ENCODE measurements at regions of chr4 and their contacts with region 1.

Region 1: GRCh38 chr4:103099691-103100392 is at the start of gene BDH2:
- DNase-seq: peak; percentile 77 to 84 (median 82)
- H3K4me3 ChIP-seq: peak within 1 kb of the TSS; percentile 4 to 54
- H3K4me3 Mint-ChIP-seq: peak within 1 kb of the TSS; percentile 81 to 97 (median 92)
- H3K27ac ChIP-seq: peak within 1 kb of the TSS; percentile 42
- H3K27ac Mint-ChIP-seq: peak within 1 kb of the TSS; percentile 59 to 95 (median 89)
- H3K4me1 ChIP-seq: peaks cover 14% of the 10 kb centered on the region
- H3K4me1 Mint-ChIP-seq: peaks cover 12 to 34% (median 24%) of the 10 kb centered on the region in 4 donors
- H3K27me3 ChIP-seq: no peaks in the 10 kb centered on the region
- H3K27me3 Mint-ChIP-seq: no peaks in the 10 kb centered on the region
- total RNA-seq, gene BDH2: 20.1 to 20.5 TPM

Region 2: DNA sequence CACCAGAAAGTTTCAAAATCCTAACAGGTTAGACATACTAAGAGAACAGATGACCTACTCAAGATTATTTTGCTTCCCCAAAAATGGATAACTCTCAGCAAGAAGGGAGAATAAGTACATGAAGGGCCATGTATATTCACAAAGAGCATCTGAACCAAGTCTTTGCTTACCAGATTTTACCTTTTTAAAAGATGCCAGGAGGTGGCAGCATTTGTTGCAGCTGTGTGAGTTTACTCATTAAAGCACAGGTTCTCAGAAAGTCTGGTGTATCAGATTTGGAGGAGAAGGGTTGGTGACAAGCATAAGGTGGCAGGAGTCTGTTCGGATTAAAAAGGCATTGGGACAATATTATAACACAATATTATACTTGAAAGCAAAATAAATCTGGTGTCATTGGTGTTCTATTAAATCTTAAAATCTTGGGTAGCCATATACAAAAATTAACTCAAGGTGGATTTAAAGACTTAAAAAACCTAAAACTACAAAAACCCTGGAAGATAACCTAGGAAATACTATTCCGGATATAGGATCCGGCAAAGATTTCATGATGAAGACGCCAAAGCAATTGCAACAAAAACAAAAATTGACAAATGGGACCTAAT is 650.0 kb before region 1 on chr4:
- CTCF ChIA-PET with region 1: interaction called, 5 read pairs
- POLR2A ChIA-PET with region 1: no interaction called
- intact Hi-C with region 1: loop called (anchors 2 kb)
- DNase-seq: peak; percentile 67 to 75 (median 68)
- H3K4me3 ChIP-seq: no peak overlapping the region
- H3K4me3 Mint-ChIP-seq: no peak overlapping the region
- H3K27ac ChIP-seq: no peak overlapping the region
- H3K27ac Mint-ChIP-seq: no peak overlapping the region
- H3K4me1 ChIP-seq: peaks cover 12% of the 10 kb centered on the region
- H3K4me1 Mint-ChIP-seq: peaks cover 5 to 21% (median 9%) of the 10 kb centered on the region in 4 donors
- H3K27me3 ChIP-seq: no peaks in the 10 kb centered on the region
- H3K27me3 Mint-ChIP-seq: no peaks in the 10 kb centered on the region

Region 3: DNA sequence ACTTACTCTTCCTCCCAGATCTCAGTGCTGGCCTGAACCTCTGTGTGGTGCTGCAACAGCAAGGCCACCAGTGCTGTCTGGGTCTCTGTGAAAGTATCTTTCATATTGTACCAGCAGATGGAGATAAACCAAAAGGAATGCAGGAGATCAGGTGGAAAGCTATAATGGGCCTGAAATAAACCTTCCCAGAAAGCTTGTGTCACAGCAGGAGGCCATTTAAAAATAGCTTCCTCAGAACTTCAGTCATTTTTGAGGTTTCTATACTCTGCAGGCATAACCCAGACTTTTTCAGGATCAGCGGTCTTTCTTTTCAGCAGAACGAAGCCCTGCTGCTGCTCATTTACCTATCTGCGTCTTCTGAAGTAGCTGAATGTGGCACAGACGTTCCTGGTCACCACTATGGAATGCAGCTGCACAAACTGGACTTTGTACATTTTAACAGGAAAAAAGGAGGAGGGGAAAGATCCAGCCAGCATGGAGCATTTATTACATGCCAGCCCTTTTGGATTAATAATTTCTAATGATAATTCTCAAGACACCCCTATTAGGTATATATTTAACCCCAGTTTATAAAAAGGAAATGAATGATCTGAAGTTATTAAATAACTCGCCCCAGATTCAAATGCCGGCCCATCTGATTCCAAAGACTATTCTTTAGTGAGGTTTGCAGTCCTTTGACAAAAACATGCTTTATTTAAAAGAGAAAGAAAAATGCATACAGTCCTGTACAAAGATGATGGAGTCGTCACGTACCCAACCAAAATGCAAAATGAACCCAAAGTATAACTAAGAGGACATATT is 478.9 kb before region 1 on chr4:
- CTCF ChIA-PET with region 1: interaction called, 4 read pairs
- POLR2A ChIA-PET with region 1: no interaction called
- intact Hi-C with region 1: loop called (anchors 1 kb)
- DNase-seq: peak in 2 of 5 donors; percentile 27 to 35
- H3K4me3 ChIP-seq: no peak overlapping the region
- H3K4me3 Mint-ChIP-seq: peak overlapping the region in 1 of 8 donors; percentile 40
- H3K27ac ChIP-seq: no peak overlapping the region
- H3K27ac Mint-ChIP-seq: peak overlapping the region in 5 of 7 donors; percentile 20 to 82 (median 80)
- H3K4me1 ChIP-seq: peaks cover 18% of the 10 kb centered on the region
- H3K4me1 Mint-ChIP-seq: peaks cover 19 to 70% (median 40%) of the 10 kb centered on the region in 4 donors
- H3K27me3 ChIP-seq: no peaks in the 10 kb centered on the region
- H3K27me3 Mint-ChIP-seq: no peaks in the 10 kb centered on the region

Region 4: DNA sequence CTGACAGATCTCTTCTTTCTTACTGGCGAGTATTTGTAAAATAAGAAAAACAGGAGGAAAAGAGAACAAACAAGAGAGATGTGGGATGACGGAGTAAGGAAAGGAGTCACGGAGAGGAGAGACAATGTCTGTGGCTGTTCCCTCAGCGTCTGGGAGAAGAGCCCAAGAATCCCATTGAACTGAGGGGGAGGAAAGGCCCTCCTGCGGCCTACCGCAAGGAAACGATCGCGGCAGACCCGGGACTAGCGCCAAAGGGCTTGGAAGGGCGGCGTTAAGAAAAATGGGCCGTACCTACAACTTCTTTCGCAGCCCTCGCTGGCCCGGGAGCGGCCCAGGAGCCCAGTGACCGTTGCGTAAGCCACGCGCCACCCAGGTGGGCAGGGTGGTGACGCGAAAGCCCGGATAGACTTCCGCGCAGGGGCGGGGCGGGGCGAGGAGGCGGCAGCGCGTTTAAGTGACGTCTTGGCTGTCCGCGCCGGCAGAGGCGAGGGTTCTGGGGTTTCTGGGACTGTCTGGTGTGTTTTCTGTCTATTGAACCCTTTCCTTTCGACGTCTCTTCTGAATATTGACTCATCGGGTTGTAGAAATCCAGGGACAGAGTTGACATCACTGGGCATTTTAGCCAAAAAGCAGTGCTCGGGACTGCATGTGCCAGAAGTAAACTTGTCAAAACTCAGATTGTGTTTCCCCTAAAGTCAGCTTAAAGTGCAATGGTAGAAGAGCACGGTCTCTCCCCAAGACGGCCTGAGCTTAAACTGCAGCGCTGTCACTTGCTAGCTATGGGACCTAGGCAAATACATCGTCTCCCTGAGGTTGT is 80.3 kb before region 1 on chr4 and contains the start of gene SLC9B1:
- CTCF ChIA-PET with region 1: interaction called, 4 read pairs
- POLR2A ChIA-PET with region 1: no interaction called
- intact Hi-C with region 1: loop called (anchors 2 kb)
- DNase-seq: peak; percentile 91 to 94 (median 93)
- H3K4me3 ChIP-seq: peak within 1 kb of the TSS; percentile 11 to 90
- H3K4me3 Mint-ChIP-seq: peak within 1 kb of the TSS; percentile 85 to 98 (median 91)
- H3K27ac ChIP-seq: peak within 1 kb of the TSS; percentile 85
- H3K27ac Mint-ChIP-seq: peak within 1 kb of the TSS in 6 of 7 donors; percentile 97 to 100 (median 99)
- H3K4me1 ChIP-seq: peaks cover 17% of the 10 kb centered on the region
- H3K4me1 Mint-ChIP-seq: peaks cover 10 to 23% (median 19%) of the 10 kb centered on the region in 4 donors
- H3K27me3 ChIP-seq: no peaks in the 10 kb centered on the region
- H3K27me3 Mint-ChIP-seq: no peaks in the 10 kb centered on the region
- total RNA-seq, gene SLC9B1: 3.2 to 5.2 TPM

Region 5: DNA sequence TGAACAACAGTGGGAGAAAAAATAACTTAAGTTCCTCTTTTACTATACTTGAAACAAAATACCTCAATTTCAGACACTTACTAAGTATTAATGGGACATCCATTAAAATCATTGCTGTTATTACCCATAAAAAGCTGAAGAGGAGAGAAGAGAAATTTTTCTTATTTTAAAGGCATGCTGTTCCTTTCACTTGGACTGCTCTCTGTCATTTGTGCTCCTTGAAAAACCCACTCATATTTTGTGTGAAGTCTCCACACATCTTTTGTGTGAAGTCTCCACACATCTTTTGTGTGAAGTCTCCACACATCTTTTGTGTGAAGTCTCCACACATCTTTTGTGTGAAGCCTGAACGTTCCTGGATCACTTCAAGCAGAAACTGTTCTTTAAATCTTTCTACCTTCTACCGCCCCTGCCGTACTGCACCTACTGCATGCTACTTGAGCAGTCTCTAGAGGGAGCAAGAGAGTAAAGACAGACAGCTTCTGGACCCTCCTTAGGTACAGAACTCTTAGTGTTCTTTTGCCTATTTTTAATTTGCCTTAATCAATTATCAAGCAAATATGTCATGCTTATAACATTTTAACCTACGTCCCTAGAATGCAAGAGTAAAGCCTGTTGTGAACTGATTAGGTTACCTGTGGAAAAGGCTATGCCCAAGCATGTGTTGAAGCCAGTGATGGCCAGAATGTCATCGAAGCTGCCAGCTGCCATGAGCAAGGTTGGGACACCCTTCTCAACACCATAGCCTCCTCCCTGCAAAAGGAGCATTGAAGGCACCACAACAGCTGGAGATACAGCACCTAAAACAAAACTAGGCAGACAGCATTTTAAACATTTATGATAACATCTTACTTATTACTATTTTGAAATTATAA is 53.2 kb before region 1 on chr4:
- CTCF ChIA-PET with region 1: interaction called, 62 read pairs
- POLR2A ChIA-PET with region 1: no interaction called
- intact Hi-C with region 1: loop called (anchors 1 kb)
- DNase-seq: peak; percentile 44 to 59 (median 48)
- H3K4me3 ChIP-seq: no peak overlapping the region
- H3K4me3 Mint-ChIP-seq: no peak overlapping the region
- H3K27ac ChIP-seq: no peak overlapping the region
- H3K27ac Mint-ChIP-seq: peak overlapping the region in 1 of 7 donors; percentile 27
- H3K4me1 ChIP-seq: no peaks in the 10 kb centered on the region
- H3K4me1 Mint-ChIP-seq: peaks cover 0 to 7% (median 0%) of the 10 kb centered on the region in 4 donors
- H3K27me3 ChIP-seq: no peaks in the 10 kb centered on the region
- H3K27me3 Mint-ChIP-seq: no peaks in the 10 kb centered on the region

Region 6: DNA sequence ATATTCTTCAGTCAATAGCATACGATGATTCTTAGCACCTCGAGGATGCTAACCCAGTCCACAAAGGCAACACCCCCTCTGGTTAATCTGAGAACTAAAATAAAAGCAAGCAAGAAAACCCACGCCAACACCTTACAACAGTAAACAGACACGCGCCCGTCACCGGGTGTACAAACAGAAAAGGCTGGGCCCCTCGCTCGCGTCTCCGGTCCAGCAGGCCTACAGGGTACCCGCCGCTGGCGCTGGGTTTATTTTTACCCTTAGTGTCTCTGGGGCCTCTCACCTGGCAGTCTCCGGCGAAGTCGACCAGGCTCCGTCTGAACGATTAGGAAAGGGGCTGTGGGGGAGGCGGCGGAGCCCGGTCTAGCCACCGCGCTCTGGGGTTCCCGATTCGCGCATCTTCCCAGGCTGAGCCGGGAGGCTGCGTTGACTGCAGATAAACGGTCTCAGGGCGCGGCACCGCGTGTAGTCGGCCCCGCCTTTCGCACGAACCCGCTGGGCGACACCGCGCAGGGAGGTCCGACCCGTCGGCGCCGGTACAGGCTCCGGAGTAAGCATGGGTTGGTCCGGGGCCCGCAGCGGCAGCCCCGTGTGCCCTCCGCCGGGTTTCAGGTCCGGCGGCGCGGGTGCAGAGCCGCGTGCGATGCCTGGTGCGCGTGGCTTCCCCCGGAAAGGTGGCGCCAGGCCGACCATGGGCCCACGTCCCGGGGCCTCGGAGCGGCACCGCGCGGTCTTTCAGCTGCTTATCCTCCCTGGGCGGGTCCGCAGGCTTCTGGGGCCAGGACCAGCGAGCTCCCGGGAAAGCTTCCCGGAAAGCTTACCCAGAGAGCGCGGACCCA is 23.7 kb before region 1 on chr4:
- CTCF ChIA-PET with region 1: interaction called, 59 read pairs
- POLR2A ChIA-PET with region 1: interaction called, 13 read pairs
- intact Hi-C with region 1: loop called (anchors 1 kb)
- DNase-seq: peak; percentile 72 to 79 (median 76)
- H3K4me3 ChIP-seq: peak overlapping the region; percentile 26 to 72
- H3K4me3 Mint-ChIP-seq: peak overlapping the region; percentile 94 to 98 (median 98)
- H3K27ac ChIP-seq: peak overlapping the region; percentile 78
- H3K27ac Mint-ChIP-seq: peak overlapping the region; percentile 98 to 99 (median 99)
- H3K4me1 ChIP-seq: peaks cover 37% of the 10 kb centered on the region
- H3K4me1 Mint-ChIP-seq: peaks cover 24 to 58% (median 38%) of the 10 kb centered on the region in 4 donors
- H3K27me3 ChIP-seq: no peaks in the 10 kb centered on the region
- H3K27me3 Mint-ChIP-seq: no peaks in the 10 kb centered on the region